ENCODE measurements at regions of chr2 and their contacts with region 1.

Region 1: GRCh38 chr2:154507186-154507585 is 191.3 kb upstream of the KCNJ3 start:
- DNase-seq: no peak
- ATAC-seq: peak; percentile 67
- H3K4me3 ChIP-seq: no peak overlapping the region
- H3K27ac ChIP-seq: no peak overlapping the region
- H3K4me1 ChIP-seq: no peaks in the 10 kb centered on the region
- H3K27me3 ChIP-seq: no peaks in the 10 kb centered on the region
- CTCF ChIP-seq: peak in 1 of 3 experiments; percentile 31; a peak in 2 of 6 replicates
- EP300 ChIP-seq: no peak
- POLR2A ChIP-seq: no peak
- RAD21 ChIP-seq: peak; percentile 28; the same call in 1 of the 2 replicates

Region 2: GRCh38 chr2:154497019-154497418 is 10.2 kb before region 1 on chr2:
- CTCF ChIA-PET with region 1: interaction called, 5 read pairs
- POLR2A ChIA-PET with region 1: no interaction called
- RAD21 ChIA-PET with region 1: no interaction called
- SMC1A ChIA-PET with region 1: interaction called, 10 read pairs
- in situ Hi-C with region 1: no loop called
- intact Hi-C with region 1: no loop called
- DNase-seq: no peak
- ATAC-seq: no peak
- H3K4me3 ChIP-seq: no peak overlapping the region
- H3K27ac ChIP-seq: no peak overlapping the region
- H3K4me1 ChIP-seq: no peaks in the 10 kb centered on the region
- H3K27me3 ChIP-seq: no peaks in the 10 kb centered on the region
- CTCF ChIP-seq: no peak
- EP300 ChIP-seq: no peak
- POLR2A ChIP-seq: no peak
- RAD21 ChIP-seq: no peak

Region 3: GRCh38 chr2:154527962-154528361 is 20.8 kb after region 1 on chr2:
- CTCF ChIA-PET with region 1: interaction called, 3 read pairs
- POLR2A ChIA-PET with region 1: no interaction called
- RAD21 ChIA-PET with region 1: interaction called, 10 read pairs
- SMC1A ChIA-PET with region 1: interaction called, 11 read pairs
- in situ Hi-C with region 1: no loop called
- intact Hi-C with region 1: no loop called
- DNase-seq: peak; percentile 15
- ATAC-seq: peak; percentile 61
- H3K4me3 ChIP-seq: no peak overlapping the region
- H3K27ac ChIP-seq: no peak overlapping the region
- H3K4me1 ChIP-seq: no peaks in the 10 kb centered on the region
- H3K27me3 ChIP-seq: no peaks in the 10 kb centered on the region
- CTCF ChIP-seq: no peak
- EP300 ChIP-seq: no peak
- POLR2A ChIP-seq: no peak
- RAD21 ChIP-seq: no peak

Region 4: DNA sequence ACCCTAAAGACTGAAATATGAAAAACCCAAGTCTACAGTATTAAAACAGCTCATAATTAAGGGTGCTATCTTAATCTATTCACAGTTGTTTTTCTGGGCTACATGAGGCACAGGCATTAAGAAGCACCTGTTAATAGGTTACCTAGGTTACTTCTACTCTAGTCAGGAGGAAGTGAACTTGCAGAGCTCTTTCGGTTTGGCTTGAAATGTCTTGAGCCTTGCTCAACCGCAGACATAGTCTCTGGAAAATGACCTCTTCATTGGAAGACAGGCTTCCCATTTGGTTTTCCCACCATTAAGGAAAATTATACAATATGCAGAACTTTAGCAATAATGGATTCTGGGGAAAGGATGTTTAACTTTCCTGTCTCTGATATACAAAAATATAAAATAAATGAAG is 49.0 kb after region 1 on chr2:
- CTCF ChIA-PET with region 1: interaction called, 5 read pairs
- POLR2A ChIA-PET with region 1: no interaction called
- RAD21 ChIA-PET with region 1: interaction called, 4 read pairs
- SMC1A ChIA-PET with region 1: interaction called, 13 read pairs
- in situ Hi-C with region 1: no loop called
- intact Hi-C with region 1: no loop called
- DNase-seq: no peak
- ATAC-seq: peak; percentile 92
- H3K4me3 ChIP-seq: no peak overlapping the region
- H3K27ac ChIP-seq: no peak overlapping the region
- H3K4me1 ChIP-seq: no peaks in the 10 kb centered on the region
- H3K27me3 ChIP-seq: no peaks in the 10 kb centered on the region
- CTCF ChIP-seq: no peak
- EP300 ChIP-seq: no peak
- POLR2A ChIP-seq: no peak
- RAD21 ChIP-seq: no peak

Region 5: DNA sequence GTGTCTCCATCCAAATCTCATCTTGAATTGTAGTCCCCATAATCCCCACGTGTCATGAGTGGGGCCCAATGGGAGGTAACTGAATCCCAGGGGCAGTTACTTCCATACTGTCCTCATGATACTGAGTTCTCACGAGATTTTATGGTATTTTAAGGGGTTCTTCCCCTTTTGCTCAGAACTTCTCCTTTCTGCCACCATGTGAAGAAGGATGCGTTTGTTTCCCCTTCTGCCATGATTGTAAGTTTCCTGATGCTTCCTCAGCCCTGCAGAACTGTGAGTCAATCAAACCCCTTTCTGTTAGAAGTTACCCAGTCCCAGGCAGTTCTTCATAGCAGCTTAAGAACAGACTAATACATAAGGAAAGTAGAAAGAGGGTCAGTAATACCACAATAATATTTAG is 671.7 kb after region 1 on chr2:
- CTCF ChIA-PET with region 1: no interaction called
- POLR2A ChIA-PET with region 1: no interaction called
- RAD21 ChIA-PET with region 1: no interaction called
- SMC1A ChIA-PET with region 1: no interaction called
- in situ Hi-C with region 1: no loop called
- intact Hi-C with region 1: no loop called
- DNase-seq: no peak
- ATAC-seq: no peak; the same call in 2 of the 3 replicates
- H3K4me3 ChIP-seq: no peak overlapping the region
- H3K27ac ChIP-seq: no peak overlapping the region
- H3K4me1 ChIP-seq: no peaks in the 10 kb centered on the region
- H3K27me3 ChIP-seq: no peaks in the 10 kb centered on the region
- CTCF ChIP-seq: no peak
- EP300 ChIP-seq: no peak
- POLR2A ChIP-seq: no peak
- RAD21 ChIP-seq: no peak